Naive thymus-derived CD4-positive, alpha-beta T cell (primary cell): ENCODE measurements at regions of chr4 and their contacts with region 1.

Region 1: GRCh38 chr4:154551872-154552686 is 1.9 kb upstream of the PLRG1 start:
- DNase-seq: peak; percentile 25 to 70 (median 61)
- ATAC-seq: peak; percentile 61
- H3K4me3 ChIP-seq: no peak overlapping the region
- H3K4me3 Mint-ChIP-seq: peak overlapping the region in 2 of 10 donors; percentile 12 to 17
- H3K27ac ChIP-seq: no peak overlapping the region
- H3K27ac Mint-ChIP-seq: peak overlapping the region in 3 of 9 donors; percentile 41 to 67 (median 43)
- H3K4me1 ChIP-seq: peaks cover 6 to 18% of the 10 kb centered on the region in 2 donors
- H3K4me1 Mint-ChIP-seq: peaks cover 13 to 36% (median 31%) of the 10 kb centered on the region in 7 donors
- H3K27me3 ChIP-seq: no peaks in the 10 kb centered on the region
- H3K27me3 Mint-ChIP-seq: peaks cover 0 to 5% (median 0%) of the 10 kb centered on the region in 5 donors

Region 2: DNA sequence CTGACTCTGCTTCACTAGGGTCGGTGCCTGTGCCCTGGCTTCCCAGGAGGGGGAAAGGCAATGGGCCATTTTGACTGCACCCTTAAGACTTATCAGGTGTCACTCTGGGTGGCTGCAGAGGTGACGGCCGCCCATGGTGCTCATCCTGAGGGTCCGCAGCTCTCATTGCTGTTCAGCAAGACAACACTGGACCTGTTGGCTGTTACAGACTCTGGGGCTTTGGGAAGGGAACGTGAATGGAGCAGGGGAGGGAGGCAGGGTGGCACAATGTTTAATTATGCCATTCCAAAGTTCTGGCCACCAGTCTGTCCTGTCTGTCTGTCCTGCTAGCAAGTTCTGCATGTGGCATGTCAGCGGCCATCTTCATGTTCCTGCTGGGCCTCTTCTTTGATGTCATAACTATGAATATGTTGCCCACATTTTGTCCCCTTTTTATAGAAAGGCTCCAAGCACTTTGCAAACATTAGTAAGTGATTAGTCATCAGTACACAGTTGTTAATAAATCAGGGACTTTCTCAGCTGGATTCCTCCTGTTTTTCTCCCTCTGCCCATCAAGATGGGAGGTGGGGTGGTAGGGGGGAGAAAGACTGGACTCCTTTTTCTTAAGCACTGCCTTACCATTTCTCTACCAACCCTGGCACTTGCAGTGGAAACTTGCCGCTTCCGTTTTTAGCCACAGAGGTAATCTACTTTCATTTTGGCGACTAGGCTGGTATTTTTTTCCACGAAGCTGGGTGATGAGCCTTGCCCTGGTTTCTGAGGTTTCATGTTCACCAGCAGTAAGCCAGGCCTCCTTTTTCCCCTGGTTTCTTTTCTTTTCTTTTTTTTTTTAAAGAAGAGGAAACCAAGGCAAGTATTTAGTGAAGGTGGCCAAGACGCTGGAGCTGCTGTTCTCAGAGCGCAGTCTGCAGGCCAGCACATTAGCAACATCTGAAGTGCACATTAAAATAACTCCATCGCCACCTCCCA is 1436.5 kb before region 1 on chr4:
- CTCF ChIA-PET with region 1: no interaction called
- POLR2A ChIA-PET with region 1: no interaction called
- intact Hi-C with region 1: no loop called
- DNase-seq: peak in 8 of 9 donors; percentile 64 to 93 (median 89)
- ATAC-seq: peak; percentile 65
- H3K4me3 ChIP-seq: peak overlapping the region; percentile 46
- H3K4me3 Mint-ChIP-seq: peak overlapping the region in 2 of 10 donors; percentile 70 to 79
- H3K27ac ChIP-seq: peak overlapping the region; percentile 84
- H3K27ac Mint-ChIP-seq: no peak overlapping the region
- H3K4me1 ChIP-seq: peaks cover 43 to 62% of the 10 kb centered on the region in 2 donors
- H3K4me1 Mint-ChIP-seq: peaks cover 0 to 26% (median 11%) of the 10 kb centered on the region in 7 donors
- H3K27me3 ChIP-seq: no peaks in the 10 kb centered on the region
- H3K27me3 Mint-ChIP-seq: peaks cover 0 to 9% (median 0%) of the 10 kb centered on the region in 5 donors

Region 3: DNA sequence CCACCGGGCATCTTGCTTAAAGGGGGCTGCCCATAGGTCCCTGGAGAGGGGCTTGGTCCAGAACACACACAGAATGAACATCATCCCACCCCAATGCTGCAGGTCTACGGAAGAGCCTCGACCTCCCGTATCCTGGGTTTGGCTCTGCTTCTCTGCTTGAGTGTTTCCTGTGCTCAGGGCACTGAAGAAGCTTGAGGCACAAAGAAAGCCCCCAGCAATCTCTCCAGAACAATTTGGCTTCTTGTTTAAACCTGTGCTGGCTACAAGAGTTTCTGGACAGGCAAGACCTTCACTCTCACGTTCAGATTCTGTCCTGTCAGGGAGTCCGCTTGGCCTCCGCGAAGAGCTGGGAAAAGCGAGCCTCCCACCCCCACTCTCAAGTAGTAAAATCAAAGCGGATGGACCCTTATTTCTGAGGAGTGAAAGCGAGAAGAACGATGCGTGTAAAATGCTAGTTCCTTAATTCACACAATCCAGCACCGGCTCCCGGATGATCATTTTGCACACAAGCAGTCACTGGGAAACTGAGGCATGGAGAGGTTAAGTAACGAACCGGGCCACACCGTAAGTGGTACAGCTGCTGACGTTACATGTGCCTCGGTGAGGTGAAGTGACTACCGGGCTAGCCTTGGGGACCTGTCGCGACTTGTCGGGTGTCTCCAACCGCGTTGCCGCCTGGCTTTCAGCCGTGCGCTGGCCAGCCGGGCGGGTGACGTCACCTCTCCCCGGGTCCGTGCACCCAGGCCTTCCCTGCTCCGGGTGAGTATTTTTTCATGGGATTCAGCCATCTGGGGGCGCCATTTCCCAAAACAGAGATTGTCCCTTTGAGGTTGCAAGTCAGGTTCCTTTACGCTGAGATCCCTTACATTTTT is 760.1 kb before region 1 on chr4:
- CTCF ChIA-PET with region 1: no interaction called
- POLR2A ChIA-PET with region 1: no interaction called
- intact Hi-C with region 1: loop called in 1 of 2 experiments (anchors 5 kb)
- DNase-seq: peak in 1 of 9 donors; percentile 22
- ATAC-seq: no peak
- H3K4me3 ChIP-seq: peak overlapping the region; percentile 38
- H3K4me3 Mint-ChIP-seq: peak overlapping the region; percentile 61 to 87 (median 80)
- H3K27ac ChIP-seq: no peak overlapping the region
- H3K27ac Mint-ChIP-seq: no peak overlapping the region
- H3K4me1 ChIP-seq: peaks cover 13 to 37% of the 10 kb centered on the region in 2 donors
- H3K4me1 Mint-ChIP-seq: peaks cover 21 to 62% (median 42%) of the 10 kb centered on the region in 7 donors
- H3K27me3 ChIP-seq: peaks cover 7 to 26% of the 10 kb centered on the region in 2 donors
- H3K27me3 Mint-ChIP-seq: peaks cover 67 to 95% (median 82%) of the 10 kb centered on the region in 5 donors

Region 4: DNA sequence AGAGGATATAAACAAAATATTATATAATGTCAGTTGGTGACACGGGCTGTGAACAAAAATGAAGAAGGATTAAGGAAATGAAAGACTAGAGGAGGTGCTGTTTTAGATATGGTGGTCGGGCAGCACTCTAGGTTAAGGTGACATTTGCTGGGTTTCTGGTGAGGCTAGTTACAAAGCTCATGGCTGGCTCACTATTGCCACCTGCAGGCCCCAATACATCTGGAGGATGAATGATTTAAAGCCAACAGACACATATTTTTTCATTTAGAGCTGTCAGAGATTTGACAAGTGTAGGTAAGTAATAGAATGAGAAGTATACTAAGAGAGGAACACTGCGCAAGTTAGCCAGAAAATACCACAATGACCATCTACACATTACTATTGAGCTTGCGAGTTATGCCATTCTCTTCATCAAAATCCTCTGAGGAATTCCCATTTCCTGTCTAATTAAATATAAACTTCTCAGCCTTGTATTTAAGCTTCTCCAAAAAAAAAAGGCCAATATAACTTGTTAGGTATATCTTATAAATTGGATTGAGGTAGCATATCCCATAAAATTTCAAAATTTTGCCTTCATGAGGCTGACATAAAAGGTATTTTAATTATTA is 66.7 kb after region 1 on chr4:
- CTCF ChIA-PET with region 1: interaction called, 24 read pairs
- POLR2A ChIA-PET with region 1: interaction called, 4 read pairs
- intact Hi-C with region 1: loop called (anchors 1 kb)
- DNase-seq: peak in 7 of 9 donors; percentile 25 to 51 (median 39)
- ATAC-seq: peak; percentile 76
- H3K4me3 ChIP-seq: no peak overlapping the region
- H3K4me3 Mint-ChIP-seq: no peak overlapping the region
- H3K27ac ChIP-seq: no peak overlapping the region
- H3K27ac Mint-ChIP-seq: peak overlapping the region in 1 of 9 donors; percentile 21
- H3K4me1 ChIP-seq: no peaks in the 10 kb centered on the region
- H3K4me1 Mint-ChIP-seq: peaks cover 0 to 18% (median 5%) of the 10 kb centered on the region in 7 donors
- H3K27me3 ChIP-seq: no peaks in the 10 kb centered on the region
- H3K27me3 Mint-ChIP-seq: peaks cover 0 to 23% (median 4%) of the 10 kb centered on the region in 5 donors

Region 5: DNA sequence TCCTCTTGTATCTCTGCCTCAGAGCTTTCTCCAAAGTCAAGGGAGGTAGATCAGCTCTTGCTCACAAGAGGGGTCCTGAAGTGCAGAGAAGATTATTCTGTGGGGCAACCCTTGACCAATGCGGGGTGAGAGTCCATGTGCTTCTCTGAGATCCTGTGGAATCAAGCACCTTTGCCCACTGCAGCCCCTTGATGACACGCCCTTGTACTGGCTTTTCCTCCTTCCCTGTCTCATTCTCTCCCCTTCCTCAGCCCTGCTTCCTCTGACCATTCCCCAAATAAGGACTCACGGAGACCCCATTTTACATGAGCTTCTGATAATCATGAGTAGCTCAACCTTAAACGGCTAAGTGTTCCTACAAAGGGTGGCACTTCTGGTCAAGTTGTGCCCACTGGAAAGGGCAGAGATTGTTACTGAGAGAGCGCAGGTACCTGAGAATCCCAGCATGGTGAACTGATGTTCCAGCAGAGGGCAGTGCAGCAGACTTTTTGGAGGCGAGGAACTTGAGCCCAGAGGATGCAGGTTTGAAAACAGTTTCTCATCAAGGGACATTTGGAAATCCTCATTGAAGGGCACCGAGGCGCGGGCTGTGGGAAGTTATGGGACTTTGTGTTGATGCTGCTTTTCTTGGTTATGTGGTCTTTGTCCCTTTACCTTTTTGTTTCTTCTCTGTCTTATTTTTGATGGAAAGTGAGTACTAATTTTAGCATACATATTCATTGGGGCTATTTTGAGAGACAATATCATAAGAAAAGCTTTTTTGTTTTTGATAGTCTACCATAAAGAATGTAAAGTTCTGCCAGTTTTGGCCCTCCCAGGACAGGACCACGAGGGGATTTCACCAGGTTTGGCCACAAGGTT is 430.3 kb after region 1 on chr4:
- CTCF ChIA-PET with region 1: no interaction called
- POLR2A ChIA-PET with region 1: no interaction called
- intact Hi-C with region 1: loop called in 1 of 2 experiments (anchors 2 kb)
- DNase-seq: peak in 5 of 9 donors; percentile 3 to 24 (median 7)
- ATAC-seq: peak; percentile 38
- H3K4me3 ChIP-seq: no peak overlapping the region
- H3K4me3 Mint-ChIP-seq: no peak overlapping the region
- H3K27ac ChIP-seq: no peak overlapping the region
- H3K27ac Mint-ChIP-seq: no peak overlapping the region
- H3K4me1 ChIP-seq: no peaks in the 10 kb centered on the region
- H3K4me1 Mint-ChIP-seq: peaks cover 0 to 3% (median 0%) of the 10 kb centered on the region in 7 donors
- H3K27me3 ChIP-seq: no peaks in the 10 kb centered on the region
- H3K27me3 Mint-ChIP-seq: peaks cover 0 to 19% (median 9%) of the 10 kb centered on the region in 5 donors

Region 6: DNA sequence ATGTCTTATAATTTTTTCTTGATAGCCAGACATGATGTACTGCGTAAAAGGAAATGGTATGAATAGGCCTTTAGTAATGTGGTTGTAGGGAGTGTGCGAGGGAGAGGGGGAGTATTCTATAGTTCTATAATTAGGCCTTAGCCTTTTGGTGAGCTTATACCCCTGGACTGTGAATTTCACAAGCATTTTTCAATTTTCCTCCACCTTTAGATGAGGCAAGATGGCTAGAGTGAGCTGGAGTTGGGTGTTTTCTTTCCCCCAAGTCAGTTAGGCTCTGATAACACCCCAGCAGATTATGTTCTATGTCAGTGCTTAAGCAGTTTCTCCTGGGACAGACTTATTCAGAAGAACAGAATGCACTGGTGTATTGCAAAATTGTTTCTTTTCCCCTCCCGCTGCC is 446.2 kb after region 1 on chr4:
- CTCF ChIA-PET with region 1: no interaction called
- POLR2A ChIA-PET with region 1: no interaction called
- intact Hi-C with region 1: no loop called
- DNase-seq: no peak
- ATAC-seq: no peak
- H3K4me3 ChIP-seq: no peak overlapping the region
- H3K4me3 Mint-ChIP-seq: no peak overlapping the region
- H3K27ac ChIP-seq: no peak overlapping the region
- H3K27ac Mint-ChIP-seq: no peak overlapping the region
- H3K4me1 ChIP-seq: no peaks in the 10 kb centered on the region
- H3K4me1 Mint-ChIP-seq: no peaks in the 10 kb centered on the region
- H3K27me3 ChIP-seq: no peaks in the 10 kb centered on the region
- H3K27me3 Mint-ChIP-seq: peaks cover 0 to 10% (median 4%) of the 10 kb centered on the region in 5 donors

Region 7: DNA sequence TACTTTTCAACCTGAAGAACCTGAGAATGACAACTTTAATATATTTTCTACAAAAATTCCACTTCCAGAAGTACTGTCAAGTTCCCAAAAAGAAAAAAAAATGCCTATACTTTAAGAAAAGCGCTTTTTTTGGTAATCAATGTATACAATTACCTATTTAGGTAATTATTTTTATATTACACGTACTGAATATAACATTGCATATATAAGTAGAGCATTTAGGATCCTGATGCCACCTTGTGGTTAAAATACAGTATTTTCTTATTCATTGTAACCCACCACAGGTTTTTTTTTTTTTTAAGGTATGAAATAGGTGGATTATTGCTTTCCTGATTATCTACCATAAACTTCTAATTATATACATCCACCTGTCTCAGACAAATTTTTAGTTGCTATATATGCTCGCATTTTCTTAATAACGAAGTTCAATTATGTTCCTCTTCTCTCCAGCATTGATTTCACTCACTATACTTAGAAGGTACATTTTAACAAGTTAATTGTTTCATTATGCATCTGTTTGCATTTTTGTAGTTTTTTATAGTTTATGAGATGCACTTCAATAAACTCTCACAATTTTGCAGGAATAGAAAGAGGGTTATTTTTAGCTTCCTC is 819.5 kb after region 1 on chr4:
- CTCF ChIA-PET with region 1: interaction called, 7 read pairs
- POLR2A ChIA-PET with region 1: no interaction called
- intact Hi-C with region 1: loop called (anchors 1 kb)
- DNase-seq: peak in 5 of 9 donors; percentile 19 to 37 (median 33)
- ATAC-seq: peak; percentile 33
- H3K4me3 ChIP-seq: no peak overlapping the region
- H3K4me3 Mint-ChIP-seq: no peak overlapping the region
- H3K27ac ChIP-seq: no peak overlapping the region
- H3K27ac Mint-ChIP-seq: no peak overlapping the region
- H3K4me1 ChIP-seq: peaks cover 7 to 8% of the 10 kb centered on the region in 2 donors
- H3K4me1 Mint-ChIP-seq: peaks cover 4 to 18% (median 13%) of the 10 kb centered on the region in 7 donors
- H3K27me3 ChIP-seq: no peaks in the 10 kb centered on the region
- H3K27me3 Mint-ChIP-seq: no peaks in the 10 kb centered on the region

Region 8: GRCh38 chr4:155787113-155787710 is 1235.1 kb after region 1 on chr4:
- CTCF ChIA-PET with region 1: no interaction called
- POLR2A ChIA-PET with region 1: no interaction called
- intact Hi-C with region 1: loop called in 1 of 2 experiments (anchors 1 kb)
- DNase-seq: peak in 5 of 9 donors; percentile 4 to 46 (median 8)
- ATAC-seq: peak; percentile 82
- H3K4me3 ChIP-seq: no peak overlapping the region
- H3K4me3 Mint-ChIP-seq: no peak overlapping the region
- H3K27ac ChIP-seq: no peak overlapping the region
- H3K27ac Mint-ChIP-seq: no peak overlapping the region
- H3K4me1 ChIP-seq: no peaks in the 10 kb centered on the region
- H3K4me1 Mint-ChIP-seq: peaks cover 0 to 9% (median 0%) of the 10 kb centered on the region in 7 donors
- H3K27me3 ChIP-seq: peaks cover 0 to 3% of the 10 kb centered on the region in 2 donors
- H3K27me3 Mint-ChIP-seq: peaks cover 0 to 11% (median 9%) of the 10 kb centered on the region in 5 donors